Naive thymus-derived CD4-positive, alpha-beta T cell (primary cell): ENCODE measurements at regions of chr6 and their contacts with region 1.

Region 1: DNA sequence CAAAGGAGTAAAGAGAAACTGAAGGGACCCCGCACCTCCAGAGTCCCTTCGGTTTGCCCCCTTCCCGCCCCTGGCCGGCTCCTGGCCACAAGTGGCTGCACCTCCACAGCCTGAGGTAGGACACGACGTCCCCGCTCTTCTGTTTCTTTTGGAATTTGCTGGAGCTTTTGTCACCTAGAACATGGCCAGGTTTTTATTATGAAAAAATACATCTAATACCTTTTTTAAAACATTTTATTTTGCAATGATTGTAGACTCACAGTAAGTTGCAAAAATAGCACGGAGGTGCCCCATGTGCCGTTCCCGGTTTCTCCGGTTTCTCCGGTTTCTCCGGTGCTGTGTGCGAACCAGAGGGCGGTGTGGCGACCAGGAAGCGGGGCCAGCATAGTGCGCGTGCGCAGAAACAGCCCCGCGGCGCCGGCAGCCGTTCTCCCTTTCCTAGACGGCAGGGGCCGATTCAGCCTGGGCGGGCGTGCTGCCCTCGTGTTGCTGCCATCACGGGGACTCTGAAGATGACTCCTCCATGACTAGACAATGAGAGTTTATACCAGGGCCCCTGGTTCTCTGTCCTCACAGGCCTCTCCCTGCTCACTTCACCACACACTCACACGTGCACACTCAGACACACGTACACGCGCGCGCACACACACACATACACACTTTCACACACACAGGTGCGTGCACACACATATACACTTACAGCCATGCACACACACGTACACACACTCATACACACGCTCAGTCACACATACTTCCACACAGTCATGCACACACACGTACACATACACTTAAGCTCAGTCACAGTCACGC is 102.1 kb downstream of the TMEM242 start:
- DNase-seq: peak; percentile 71 to 85 (median 82)
- ATAC-seq: peak; percentile 85
- H3K4me3 ChIP-seq: peak overlapping the region; percentile 65
- H3K4me3 Mint-ChIP-seq: peak overlapping the region; percentile 78 to 97 (median 86)
- H3K27ac ChIP-seq: peak overlapping the region; percentile 49
- H3K27ac Mint-ChIP-seq: peak overlapping the region; percentile 48 to 99 (median 85)
- H3K4me1 ChIP-seq: peaks cover 0 to 28% of the 10 kb centered on the region in 2 donors
- H3K4me1 Mint-ChIP-seq: peaks cover 31 to 55% (median 39%) of the 10 kb centered on the region in 7 donors
- H3K27me3 ChIP-seq: no peaks in the 10 kb centered on the region
- H3K27me3 Mint-ChIP-seq: peaks cover 0 to 8% (median 2%) of the 10 kb centered on the region in 5 donors

Region 2: GRCh38 chr6:157198419-157199279 is 22.6 kb before region 1 on chr6:
- CTCF ChIA-PET with region 1: no interaction called
- POLR2A ChIA-PET with region 1: no interaction called
- intact Hi-C with region 1: no loop called
- DNase-seq: no peak
- ATAC-seq: no peak
- H3K4me3 ChIP-seq: no peak overlapping the region
- H3K4me3 Mint-ChIP-seq: no peak overlapping the region
- H3K27ac ChIP-seq: no peak overlapping the region
- H3K27ac Mint-ChIP-seq: peak overlapping the region in 1 of 9 donors; percentile 75
- H3K4me1 ChIP-seq: peaks cover 7 to 9% of the 10 kb centered on the region in 2 donors
- H3K4me1 Mint-ChIP-seq: peaks cover 0 to 25% (median 15%) of the 10 kb centered on the region in 7 donors
- H3K27me3 ChIP-seq: no peaks in the 10 kb centered on the region
- H3K27me3 Mint-ChIP-seq: no peaks in the 10 kb centered on the region

Region 3: GRCh38 chr6:157235600-157236039 is 14.4 kb after region 1 on chr6:
- CTCF ChIA-PET with region 1: interaction called, 10 read pairs
- POLR2A ChIA-PET with region 1: interaction called, 18 read pairs
- intact Hi-C with region 1: loop called in 1 of 2 experiments (anchors 1 kb)
- DNase-seq: peak; percentile 38 to 61 (median 57)
- ATAC-seq: peak; percentile 89
- H3K4me3 ChIP-seq: peak overlapping the region; percentile 67
- H3K4me3 Mint-ChIP-seq: peak overlapping the region; percentile 91 to 97 (median 93)
- H3K27ac ChIP-seq: no peak overlapping the region
- H3K27ac Mint-ChIP-seq: peak overlapping the region in 8 of 9 donors; percentile 40 to 82 (median 70)
- H3K4me1 ChIP-seq: peaks cover 0 to 8% of the 10 kb centered on the region in 2 donors
- H3K4me1 Mint-ChIP-seq: peaks cover 19 to 35% (median 24%) of the 10 kb centered on the region in 7 donors
- H3K27me3 ChIP-seq: no peaks in the 10 kb centered on the region
- H3K27me3 Mint-ChIP-seq: peaks cover 11 to 56% (median 30%) of the 10 kb centered on the region in 5 donors

Region 4: DNA sequence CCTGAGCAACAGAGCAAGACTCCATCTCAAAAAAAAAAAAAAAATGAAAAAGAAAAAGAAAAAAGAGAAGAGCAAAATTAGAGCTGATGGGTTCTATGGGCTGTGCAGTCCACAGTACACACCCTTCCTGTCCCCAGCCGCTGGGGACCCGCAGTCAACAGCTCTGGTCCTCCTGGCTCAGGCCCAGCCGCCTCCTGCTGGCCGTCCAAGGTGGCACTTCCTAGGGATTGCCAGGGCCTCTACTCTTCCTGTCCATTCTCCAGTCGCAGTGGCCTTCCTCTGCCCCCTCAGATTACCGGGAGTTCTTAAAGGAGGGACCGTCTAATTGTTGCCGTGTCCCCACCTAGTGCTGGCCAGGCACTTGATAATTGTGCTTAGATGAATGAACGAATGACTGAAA is 60.4 kb after region 1 on chr6:
- CTCF ChIA-PET with region 1: no interaction called
- POLR2A ChIA-PET with region 1: no interaction called
- intact Hi-C with region 1: no loop called
- DNase-seq: no peak
- ATAC-seq: peak; percentile 79
- H3K4me3 ChIP-seq: no peak overlapping the region
- H3K4me3 Mint-ChIP-seq: no peak overlapping the region
- H3K27ac ChIP-seq: no peak overlapping the region
- H3K27ac Mint-ChIP-seq: no peak overlapping the region
- H3K4me1 ChIP-seq: no peaks in the 10 kb centered on the region
- H3K4me1 Mint-ChIP-seq: peaks cover 0 to 4% (median 0%) of the 10 kb centered on the region in 7 donors
- H3K27me3 ChIP-seq: no peaks in the 10 kb centered on the region
- H3K27me3 Mint-ChIP-seq: peaks cover 0 to 15% (median 0%) of the 10 kb centered on the region in 5 donors

Region 5: GRCh38 chr6:157443066-157443800 is 222.0 kb after region 1 on chr6:
- CTCF ChIA-PET with region 1: no interaction called
- POLR2A ChIA-PET with region 1: no interaction called
- intact Hi-C with region 1: no loop called
- DNase-seq: no peak
- ATAC-seq: no peak
- H3K4me3 ChIP-seq: no peak overlapping the region
- H3K4me3 Mint-ChIP-seq: no peak overlapping the region
- H3K27ac ChIP-seq: no peak overlapping the region
- H3K27ac Mint-ChIP-seq: peak overlapping the region in 1 of 9 donors; percentile 51
- H3K4me1 ChIP-seq: no peaks in the 10 kb centered on the region
- H3K4me1 Mint-ChIP-seq: peaks cover 0 to 11% (median 0%) of the 10 kb centered on the region in 7 donors
- H3K27me3 ChIP-seq: no peaks in the 10 kb centered on the region
- H3K27me3 Mint-ChIP-seq: no peaks in the 10 kb centered on the region